ENCODE measurements at regions of chr2 and their contacts with region 1.

Region 1: DNA sequence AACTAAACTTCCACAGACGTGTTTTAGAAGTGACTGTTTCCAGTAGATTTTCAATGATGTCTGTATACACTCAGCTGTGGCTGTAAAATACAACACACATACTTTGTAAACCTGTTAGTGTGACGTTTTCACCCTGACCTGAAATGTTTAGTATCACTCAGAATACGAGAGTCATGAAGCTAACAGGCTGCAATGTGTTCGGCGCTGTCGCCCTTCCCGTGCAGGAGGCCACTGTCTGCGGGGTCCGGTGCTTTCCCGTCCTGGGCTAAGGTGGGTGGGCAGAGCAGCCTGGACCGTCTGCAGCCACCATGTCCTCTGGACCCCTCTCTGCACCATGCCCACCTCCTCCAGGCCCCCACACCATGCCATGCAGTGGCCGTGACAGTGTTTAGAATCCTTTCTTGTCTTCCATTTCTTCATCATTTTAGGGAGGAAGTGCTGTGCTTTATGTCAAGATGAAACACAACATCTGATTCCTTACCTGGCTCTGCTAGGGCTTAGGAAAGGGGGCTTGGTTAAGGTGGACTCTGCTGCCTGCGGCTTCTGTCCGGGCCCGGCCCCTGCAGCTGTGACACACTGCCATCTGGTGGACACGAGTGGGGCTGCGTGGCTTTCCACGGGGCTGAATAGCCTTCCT is 53.8 kb upstream of the RBM44 start:
- DNase-seq: peak; percentile 86
- H3K4me3 ChIP-seq: no peak overlapping the region
- H3K27ac ChIP-seq: peak overlapping the region; percentile 80
- H3K4me1 ChIP-seq: peaks cover 21% of the 10 kb centered on the region
- H3K27me3 ChIP-seq: no peaks in the 10 kb centered on the region
- CTCF ChIP-seq: peak; percentile 96 to 97
- POLR2A ChIP-seq: peak; percentile 31

Region 2: DNA sequence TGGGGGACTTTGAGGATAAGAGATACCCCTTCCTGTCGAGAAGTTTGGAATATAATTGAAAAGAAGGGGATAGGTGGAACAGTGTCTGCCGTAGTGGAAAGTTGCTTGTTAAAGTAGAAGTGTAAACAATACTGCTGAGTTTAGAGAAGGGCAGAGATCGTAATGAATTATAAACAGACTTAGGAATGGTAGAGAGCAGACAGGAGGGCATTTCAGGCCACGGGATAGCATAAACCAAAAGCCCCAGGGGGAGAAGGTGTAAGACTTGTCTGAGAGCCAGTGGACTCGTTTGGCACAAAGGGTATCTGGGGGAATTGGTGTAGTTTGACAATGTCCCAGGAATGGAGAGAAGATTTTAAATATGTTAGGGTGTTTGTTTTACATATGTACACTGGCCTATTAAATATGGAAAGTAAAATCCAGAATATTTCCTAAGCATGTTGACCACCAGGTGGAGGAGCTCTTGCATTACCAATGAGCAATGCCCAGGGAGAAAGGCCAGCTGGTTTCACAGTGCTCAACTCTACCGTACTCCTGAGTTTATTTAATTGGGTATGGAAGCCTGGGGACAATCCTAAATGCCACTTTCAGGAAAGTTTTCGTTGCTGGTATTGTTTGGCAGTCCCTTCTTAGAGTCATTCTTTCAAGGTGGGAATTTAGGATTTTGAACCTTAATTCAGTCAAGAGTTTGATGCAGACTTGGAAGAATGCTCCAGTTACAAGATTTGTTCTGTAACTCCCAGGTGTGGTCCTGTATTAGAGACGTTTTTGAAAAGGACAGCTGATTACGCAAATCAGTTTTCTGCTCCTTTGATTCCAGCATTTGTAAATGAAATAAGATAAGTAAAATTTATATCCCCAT is 651.6 kb before region 1 on chr2:
- CTCF ChIA-PET with region 1: interaction called, 4 read pairs
- POLR2A ChIA-PET with region 1: no interaction called
- dilution Hi-C with region 1: no loop called
- intact Hi-C with region 1: loop called (anchors 2 kb)
- DNase-seq: peak; percentile 84
- H3K4me3 ChIP-seq: peak overlapping the region in 1 of 3 experiments; percentile 8
- H3K27ac ChIP-seq: peak overlapping the region; percentile 56
- H3K4me1 ChIP-seq: peaks cover 67% of the 10 kb centered on the region
- H3K27me3 ChIP-seq: no peaks in the 10 kb centered on the region
- CTCF ChIP-seq: peak; percentile 50 to 65
- POLR2A ChIP-seq: no peak

Region 3: GRCh38 chr2:237603718-237604362 is 140.9 kb before region 1 on chr2:
- CTCF ChIA-PET with region 1: interaction called, 61 read pairs
- POLR2A ChIA-PET with region 1: no interaction called
- dilution Hi-C with region 1: no loop called
- intact Hi-C with region 1: loop called (anchors 1 kb)
- DNase-seq: peak; percentile 96
- H3K4me3 ChIP-seq: no peak overlapping the region
- H3K27ac ChIP-seq: peak overlapping the region; percentile 91
- H3K4me1 ChIP-seq: peaks cover 29% of the 10 kb centered on the region
- H3K27me3 ChIP-seq: no peaks in the 10 kb centered on the region
- CTCF ChIP-seq: no peak
- POLR2A ChIP-seq: no peak

Region 4: GRCh38 chr2:237691908-237692600 is 52.7 kb before region 1 on chr2:
- CTCF ChIA-PET with region 1: interaction called, 28 read pairs
- POLR2A ChIA-PET with region 1: no interaction called
- dilution Hi-C with region 1: no loop called
- intact Hi-C with region 1: loop called (anchors 1 kb)
- DNase-seq: peak; percentile 69
- H3K4me3 ChIP-seq: peak overlapping the region; percentile 81 to 86 (median 84)
- H3K27ac ChIP-seq: peak overlapping the region; percentile 87
- H3K4me1 ChIP-seq: peaks cover 55% of the 10 kb centered on the region
- H3K27me3 ChIP-seq: no peaks in the 10 kb centered on the region
- CTCF ChIP-seq: no peak
- POLR2A ChIP-seq: no peak

Region 5: GRCh38 chr2:237708065-237708398 is 36.7 kb before region 1 on chr2:
- CTCF ChIA-PET with region 1: interaction called, 28 read pairs
- POLR2A ChIA-PET with region 1: no interaction called
- dilution Hi-C with region 1: no loop called
- intact Hi-C with region 1: loop called (anchors 2 kb)
- DNase-seq: no peak
- H3K4me3 ChIP-seq: no peak overlapping the region
- H3K27ac ChIP-seq: no peak overlapping the region
- H3K4me1 ChIP-seq: peaks cover 24% of the 10 kb centered on the region
- H3K27me3 ChIP-seq: no peaks in the 10 kb centered on the region
- CTCF ChIP-seq: no peak
- POLR2A ChIP-seq: no peak

Region 6: GRCh38 chr2:237723602-237724001 is 21.1 kb before region 1 on chr2:
- CTCF ChIA-PET with region 1: interaction called, 15 read pairs
- POLR2A ChIA-PET with region 1: no interaction called
- dilution Hi-C with region 1: no loop called
- intact Hi-C with region 1: no loop called
- DNase-seq: no peak
- H3K4me3 ChIP-seq: no peak overlapping the region
- H3K27ac ChIP-seq: no peak overlapping the region
- H3K4me1 ChIP-seq: peaks cover 34% of the 10 kb centered on the region
- H3K27me3 ChIP-seq: no peaks in the 10 kb centered on the region
- CTCF ChIP-seq: no peak
- POLR2A ChIP-seq: no peak